Gastrocnemius medialis (tissue), 4 donors: ENCODE measurements at regions of chr4 and their contacts with region 1.

Region 1: GRCh38 chr4:26459054-26459755 is 31.1 kb downstream of the CCKAR start:
- DNase-seq: no peak
- ATAC-seq: peak in 1 of 2 donors; percentile 62
- H3K4me3 ChIP-seq: no peak overlapping the region
- H3K27ac ChIP-seq: no peak overlapping the region
- H3K4me1 ChIP-seq: no peaks in the 10 kb centered on the region
- H3K27me3 ChIP-seq: no peaks in the 10 kb centered on the region
- CTCF ChIP-seq: peak in 3 of 5 experiments; percentile 45 to 53 (median 52)
- POLR2A ChIP-seq: no peak

Region 2: GRCh38 chr4:26542991-26543390 is 83.8 kb after region 1 on chr4:
- in situ Hi-C with region 1: no loop called
- intact Hi-C with region 1: no loop called
- DNase-seq: no peak
- ATAC-seq: no peak
- H3K4me3 ChIP-seq: no peak overlapping the region
- H3K27ac ChIP-seq: no peak overlapping the region
- H3K4me1 ChIP-seq: no peaks in the 10 kb centered on the region
- H3K27me3 ChIP-seq: no peaks in the 10 kb centered on the region
- CTCF ChIP-seq: no peak
- POLR2A ChIP-seq: no peak

Region 3: GRCh38 chr4:26568446-26568994 is 109.3 kb after region 1 on chr4:
- in situ Hi-C with region 1: loop called in 1 of 4 experiments (anchors 25 kb)
- intact Hi-C with region 1: no loop called
- DNase-seq: no peak
- ATAC-seq: no peak
- H3K4me3 ChIP-seq: no peak overlapping the region
- H3K27ac ChIP-seq: no peak overlapping the region
- H3K4me1 ChIP-seq: no peaks in the 10 kb centered on the region
- H3K27me3 ChIP-seq: no peaks in the 10 kb centered on the region
- CTCF ChIP-seq: no peak
- POLR2A ChIP-seq: no peak

Region 4: GRCh38 chr4:26719954-26720552 is 260.8 kb after region 1 on chr4:
- in situ Hi-C with region 1: loop called in 3 of 4 experiments (anchors 10 to 25 kb)
- intact Hi-C with region 1: loop called (anchors 5 kb)
- DNase-seq: no peak
- ATAC-seq: no peak
- H3K4me3 ChIP-seq: no peak overlapping the region
- H3K27ac ChIP-seq: no peak overlapping the region
- H3K4me1 ChIP-seq: peaks cover 0 to 4% of the 10 kb centered on the region in 2 donors
- H3K27me3 ChIP-seq: no peaks in the 10 kb centered on the region
- CTCF ChIP-seq: peak in 4 of 5 experiments; percentile 14 to 54 (median 26)
- POLR2A ChIP-seq: no peak